HepG2 (cell line): ENCODE measurements at regions of chr3 and their contacts with region 1.

Region 1: DNA sequence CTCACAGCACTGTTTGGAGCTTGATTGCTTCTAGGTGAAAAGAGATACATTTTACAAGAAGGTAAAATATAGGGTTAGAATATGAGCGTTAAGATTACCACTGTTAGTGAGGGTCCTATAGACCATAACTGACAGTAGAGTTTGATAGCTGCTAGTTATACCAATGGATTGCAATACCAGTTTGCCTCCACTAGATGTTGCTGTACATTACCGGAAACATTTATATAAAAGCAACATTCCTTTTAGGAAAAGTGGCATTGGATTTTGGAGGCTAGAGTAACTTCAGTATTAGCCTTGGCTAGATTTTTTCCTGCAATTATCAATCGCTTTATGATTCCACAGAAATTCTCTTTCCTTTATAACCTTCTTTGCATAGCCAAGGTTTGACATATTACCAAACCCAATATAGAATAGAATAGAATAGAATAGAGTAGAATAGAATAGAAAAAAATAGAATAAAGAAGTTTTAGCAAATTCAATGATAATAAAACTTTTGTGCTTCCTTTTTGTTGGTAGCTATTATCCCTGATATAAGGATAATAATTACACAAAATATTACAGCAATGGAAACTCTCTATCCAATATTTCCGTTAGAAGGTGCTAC is 1093.6 kb upstream of the ALCAM start:
- DNase-seq: peak; percentile 31
- ATAC-seq: peak; percentile 63
- H3K4me3 ChIP-seq: no peak overlapping the region
- H3K27ac ChIP-seq: no peak overlapping the region
- H3K4me1 ChIP-seq: no peaks in the 10 kb centered on the region
- H3K27me3 ChIP-seq: no peaks in the 10 kb centered on the region
- CTCF ChIP-seq: peak; percentile 63
- EP300 ChIP-seq: no peak
- POLR2A ChIP-seq: no peak
- RAD21 ChIP-seq: no peak

Region 2: DNA sequence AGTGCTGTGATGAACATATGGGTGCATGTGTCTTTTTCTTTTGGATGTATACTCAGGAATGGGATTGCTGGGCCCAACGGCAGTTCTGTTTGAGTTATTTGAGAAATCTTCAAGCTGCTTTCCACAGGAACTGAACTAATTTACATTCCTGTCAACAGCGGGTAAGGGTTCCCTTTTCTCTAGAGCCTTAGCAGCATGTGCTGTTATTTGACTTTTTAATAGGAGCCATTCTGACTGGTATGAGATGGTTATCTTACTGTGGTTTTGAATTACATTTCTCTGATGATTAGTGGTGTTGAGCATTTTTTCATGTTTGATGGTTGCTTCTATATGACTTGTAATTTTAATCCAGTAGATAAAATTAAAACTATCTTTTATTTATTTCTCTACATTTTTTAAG is 75.0 kb before region 1 on chr3:
- CTCF ChIA-PET with region 1: no interaction called
- POLR2A ChIA-PET with region 1: no interaction called
- in situ Hi-C with region 1: no loop called
- intact Hi-C with region 1: no loop called
- DNase-seq: no peak
- ATAC-seq: no peak
- H3K4me3 ChIP-seq: no peak overlapping the region
- H3K27ac ChIP-seq: no peak overlapping the region
- H3K4me1 ChIP-seq: no peaks in the 10 kb centered on the region
- H3K27me3 ChIP-seq: no peaks in the 10 kb centered on the region
- CTCF ChIP-seq: no peak
- EP300 ChIP-seq: no peak
- POLR2A ChIP-seq: no peak
- RAD21 ChIP-seq: no peak

Region 3: GRCh38 chr3:104392327-104392726 is 119.2 kb after region 1 on chr3:
- CTCF ChIA-PET with region 1: no interaction called
- POLR2A ChIA-PET with region 1: no interaction called
- in situ Hi-C with region 1: no loop called
- intact Hi-C with region 1: loop called (anchors 1 kb)
- DNase-seq: peak; percentile 4
- ATAC-seq: peak; percentile 59; the same call in 2 of the 3 replicates
- H3K4me3 ChIP-seq: no peak overlapping the region
- H3K27ac ChIP-seq: no peak overlapping the region
- H3K4me1 ChIP-seq: no peaks in the 10 kb centered on the region
- H3K27me3 ChIP-seq: no peaks in the 10 kb centered on the region
- CTCF ChIP-seq: peak; percentile 28
- EP300 ChIP-seq: no peak
- POLR2A ChIP-seq: no peak
- RAD21 ChIP-seq: no peak